Tibial artery (tissue), 4 donors: ENCODE measurements at regions of chr6 and their contacts with region 1.

Region 1: DNA sequence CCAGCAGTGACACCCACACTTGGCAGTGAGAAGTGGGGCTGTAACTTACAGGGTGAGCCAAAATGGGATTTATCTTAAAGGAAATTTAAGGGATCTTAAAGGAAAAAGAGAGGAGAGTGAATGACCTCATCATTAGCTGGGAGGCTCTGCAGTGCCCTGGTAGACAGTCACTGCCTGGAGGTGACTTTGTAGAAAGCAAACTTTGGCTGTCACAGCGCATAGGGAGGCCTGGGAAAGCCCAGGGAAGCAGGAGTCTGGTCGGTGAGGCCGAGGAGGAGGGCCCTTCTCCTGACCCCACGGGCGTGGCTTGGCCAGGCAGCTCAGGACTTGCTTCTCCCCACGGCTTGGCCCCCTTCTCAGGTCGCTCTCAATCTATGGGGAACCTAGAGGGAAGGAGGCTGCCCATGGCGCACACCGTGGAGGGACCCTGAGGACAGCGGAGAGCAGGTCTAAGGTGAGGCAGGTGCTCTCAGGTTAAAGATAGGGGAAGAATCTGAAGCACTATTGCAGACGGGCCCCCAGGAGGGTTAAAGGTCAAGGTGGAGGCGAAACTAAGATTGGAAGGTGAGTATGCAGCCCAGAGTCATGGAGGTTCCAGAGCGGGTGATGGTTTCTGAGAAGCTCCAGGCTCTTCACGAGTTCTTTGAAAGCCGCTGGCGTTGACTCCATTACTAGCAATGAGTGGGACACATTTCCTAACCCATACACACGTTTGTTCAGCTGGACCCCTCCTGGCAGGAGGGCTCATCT is 15.6 kb upstream of the RIPK1 start:
- DNase-seq: no peak
- H3K4me3 ChIP-seq: no peak overlapping the region
- H3K27ac ChIP-seq: no peak overlapping the region
- H3K4me1 ChIP-seq: peaks cover 0 to 23% (median 10%) of the 10 kb centered on the region in 4 donors
- H3K27me3 ChIP-seq: no peaks in the 10 kb centered on the region
- CTCF ChIP-seq: no peak

Region 2: GRCh38 chr6:2999618-3000557 is 52.8 kb before region 1 on chr6 and contains the start of gene NQO2:
- intact Hi-C with region 1: loop called (anchors 2 kb)
- DNase-seq: peak; percentile 88 to 97
- H3K4me3 ChIP-seq: peak within 1 kb of the TSS; percentile 68 to 70
- H3K27ac ChIP-seq: peak within 1 kb of the TSS; percentile 91 to 94
- H3K4me1 ChIP-seq: peaks cover 5 to 34% (median 24%) of the 10 kb centered on the region in 4 donors
- H3K27me3 ChIP-seq: no peaks in the 10 kb centered on the region
- CTCF ChIP-seq: peak in 1 of 2 experiments; percentile 20